ENCODE measurements at regions of chr19 and their contacts with region 1.

Region 1: DNA sequence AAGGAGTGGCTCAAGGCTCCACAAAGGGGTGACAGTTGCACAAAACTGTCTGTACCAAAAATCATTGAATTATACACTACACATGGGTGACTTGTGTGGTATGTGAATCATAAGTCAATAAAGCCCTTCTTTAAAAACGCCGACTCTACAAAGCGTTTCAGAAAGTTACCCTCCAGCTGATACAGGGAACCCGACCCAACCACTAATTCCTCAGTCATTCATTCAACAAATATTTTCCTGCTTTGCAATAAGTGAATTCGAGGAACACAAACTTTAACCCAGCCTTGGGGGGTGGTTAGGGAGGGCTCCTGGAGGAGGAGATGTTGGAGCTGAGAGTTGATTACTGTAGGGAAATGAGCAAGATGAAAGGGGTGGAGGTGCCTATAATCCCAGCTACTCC is 32.0 kb downstream of the LTBP4 start:
- DNase-seq: no peak
- H3K4me3 ChIP-seq: no peak overlapping the region
- H3K27ac ChIP-seq: no peak overlapping the region
- H3K4me1 ChIP-seq: no peaks in the 10 kb centered on the region
- H3K27me3 ChIP-seq: peaks cover 0 to 4% of the 10 kb centered on the region in 2 experiments
- CTCF ChIP-seq: no peak
- POLR2A ChIP-seq: no peak

Region 2: GRCh38 chr19:40139533-40140287 is 493.5 kb before region 1 on chr19:
- CTCF ChIA-PET with region 1: interaction called, 22 read pairs
- POLR2A ChIA-PET with region 1: no interaction called
- dilution Hi-C with region 1: no loop called
- intact Hi-C with region 1: loop called (anchors 10 kb)
- DNase-seq: peak; percentile 50
- H3K4me3 ChIP-seq: no peak overlapping the region
- H3K27ac ChIP-seq: no peak overlapping the region
- H3K4me1 ChIP-seq: no peaks in the 10 kb centered on the region
- H3K27me3 ChIP-seq: peaks cover 2 to 6% of the 10 kb centered on the region in 2 experiments
- CTCF ChIP-seq: peak; percentile 46 to 56
- POLR2A ChIP-seq: no peak

Region 3: DNA sequence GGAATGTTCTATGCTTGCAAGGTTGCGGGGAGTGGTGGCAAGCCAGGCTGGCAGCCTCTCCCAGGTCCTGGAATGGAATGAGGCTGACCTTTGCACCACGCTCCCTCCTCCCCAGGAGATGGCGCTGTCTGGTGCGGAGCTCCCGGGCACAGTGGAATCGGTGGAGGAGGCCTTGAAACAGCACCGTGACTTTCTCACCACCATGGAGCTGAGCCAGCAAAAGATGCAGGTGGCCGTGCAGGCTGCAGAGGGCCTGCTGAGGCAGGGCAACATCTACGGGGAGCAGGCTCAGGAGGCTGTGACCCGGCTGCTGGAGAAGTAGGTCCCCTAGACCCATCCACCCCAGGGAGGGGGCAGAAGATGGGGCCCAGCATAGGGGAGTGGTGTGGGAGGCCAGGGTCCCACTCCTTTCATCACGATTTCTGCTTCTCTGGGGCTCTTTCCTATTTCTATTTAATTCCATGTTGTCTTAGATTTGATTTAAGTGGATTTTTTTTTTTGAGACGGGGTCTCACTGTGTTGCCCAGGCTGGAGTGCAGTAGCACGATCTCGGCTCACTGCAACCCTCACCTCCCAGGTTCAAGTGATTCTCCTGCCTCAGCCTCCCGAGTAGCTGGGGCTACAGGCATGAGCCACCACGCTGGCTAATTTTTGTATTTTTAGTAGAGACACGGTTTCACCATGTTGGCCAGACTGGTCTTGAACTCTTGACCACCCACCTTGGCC is 109.7 kb before region 1 on chr19:
- CTCF ChIA-PET with region 1: interaction called, 25 read pairs
- POLR2A ChIA-PET with region 1: no interaction called
- dilution Hi-C with region 1: no loop called
- intact Hi-C with region 1: loop called (anchors 1 kb)
- DNase-seq: peak; percentile 49
- H3K4me3 ChIP-seq: no peak overlapping the region
- H3K27ac ChIP-seq: no peak overlapping the region
- H3K4me1 ChIP-seq: no peaks in the 10 kb centered on the region
- H3K27me3 ChIP-seq: peaks cover 2 to 7% of the 10 kb centered on the region in 2 experiments
- CTCF ChIP-seq: peak; percentile 67 to 84
- POLR2A ChIP-seq: no peak

Region 4: DNA sequence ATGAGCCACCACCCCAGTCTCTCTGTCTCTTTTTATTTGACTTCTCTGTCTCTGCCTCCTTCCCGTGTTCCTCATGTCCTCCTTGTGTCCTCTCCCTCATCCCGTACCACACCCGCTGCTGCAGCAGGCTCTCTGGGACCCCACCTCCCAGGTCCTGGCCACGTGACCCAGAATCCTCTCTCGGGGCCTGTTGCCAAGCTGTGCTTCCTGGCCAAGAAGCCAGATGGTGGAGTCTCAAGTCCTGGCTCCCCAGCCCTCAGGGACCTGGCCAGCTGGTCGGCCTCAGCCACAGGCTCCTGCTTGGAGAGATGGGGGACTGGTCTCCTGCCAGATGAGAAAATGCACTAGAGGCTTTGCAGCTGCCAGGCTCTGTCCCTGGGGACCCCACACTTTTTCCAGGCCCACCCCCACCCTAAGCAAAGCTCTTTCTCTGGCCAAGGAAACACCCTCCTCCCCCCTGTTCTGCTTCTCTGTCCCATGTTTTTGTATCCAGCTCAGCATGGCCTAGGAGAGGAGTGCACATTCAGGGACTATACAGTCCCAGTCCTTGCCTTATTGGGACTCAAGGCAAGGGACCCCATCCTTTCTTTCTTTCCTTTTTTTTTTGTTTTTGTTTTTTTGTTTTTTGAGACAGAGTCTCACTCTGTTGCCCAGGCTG is 90.9 kb before region 1 on chr19:
- CTCF ChIA-PET with region 1: interaction called, 48 read pairs
- POLR2A ChIA-PET with region 1: no interaction called
- dilution Hi-C with region 1: no loop called
- intact Hi-C with region 1: loop called (anchors 1 kb)
- DNase-seq: no peak
- H3K4me3 ChIP-seq: no peak overlapping the region
- H3K27ac ChIP-seq: no peak overlapping the region
- H3K4me1 ChIP-seq: no peaks in the 10 kb centered on the region
- H3K27me3 ChIP-seq: no peaks in the 10 kb centered on the region
- CTCF ChIP-seq: no peak
- POLR2A ChIP-seq: no peak

Region 5: DNA sequence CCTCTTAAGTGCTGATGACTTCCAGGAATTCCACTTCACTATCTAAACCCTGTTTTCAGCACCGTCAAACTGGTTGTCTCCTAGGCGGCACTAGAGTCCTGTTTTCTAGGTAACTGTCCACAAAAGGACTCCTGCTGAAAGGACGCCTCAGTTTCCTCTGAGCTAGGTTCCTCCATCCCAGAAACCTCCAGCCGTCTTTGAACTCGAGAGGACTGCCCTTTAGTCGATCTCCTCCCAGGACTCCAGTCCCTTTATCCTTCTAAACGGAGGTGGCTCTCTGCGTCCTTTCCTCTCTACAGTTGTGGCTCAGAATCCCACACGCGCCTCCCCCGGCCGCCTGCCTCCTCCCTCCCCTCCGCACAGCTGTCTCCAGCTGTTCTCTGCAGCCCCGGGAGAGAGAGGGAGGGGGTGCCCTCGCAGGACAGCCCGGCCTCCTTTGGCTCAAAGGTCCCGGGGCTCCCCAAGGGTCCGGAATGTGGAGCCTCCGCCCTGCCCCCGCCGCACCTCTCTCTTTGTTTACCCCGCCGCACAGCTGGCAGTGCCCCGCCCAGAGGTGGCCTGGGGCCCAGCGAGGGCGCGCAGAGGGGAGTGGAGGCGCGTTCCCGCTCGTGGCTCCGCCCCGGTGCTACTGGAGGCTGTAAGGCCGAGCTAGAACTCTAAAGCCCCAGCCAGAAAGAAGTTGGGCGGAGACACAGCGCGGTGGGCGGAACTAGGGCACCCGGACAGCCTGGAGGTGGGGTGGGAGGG is 29.6 kb before region 1 on chr19:
- CTCF ChIA-PET with region 1: interaction called, 126 read pairs
- POLR2A ChIA-PET with region 1: no interaction called
- dilution Hi-C with region 1: no loop called
- intact Hi-C with region 1: loop called (anchors 1 kb)
- DNase-seq: peak; percentile 96
- H3K4me3 ChIP-seq: peak overlapping the region in 2 of 3 experiments; percentile 12 to 45
- H3K27ac ChIP-seq: no peak overlapping the region
- H3K4me1 ChIP-seq: peaks cover 45% of the 10 kb centered on the region
- H3K27me3 ChIP-seq: peaks cover 4 to 6% of the 10 kb centered on the region in 2 experiments
- CTCF ChIP-seq: no peak
- POLR2A ChIP-seq: no peak

Region 6: GRCh38 chr19:40614622-40615411 is 18.4 kb before region 1 on chr19:
- CTCF ChIA-PET with region 1: interaction called, 70 read pairs
- POLR2A ChIA-PET with region 1: no interaction called
- dilution Hi-C with region 1: no loop called
- intact Hi-C with region 1: no loop called
- DNase-seq: peak; percentile 78
- H3K4me3 ChIP-seq: peak overlapping the region; percentile 26 to 43 (median 40)
- H3K27ac ChIP-seq: peak overlapping the region; percentile 83
- H3K4me1 ChIP-seq: peaks cover 19% of the 10 kb centered on the region
- H3K27me3 ChIP-seq: no peaks in the 10 kb centered on the region
- CTCF ChIP-seq: no peak
- POLR2A ChIP-seq: no peak